Left cardiac atrium (tissue), 4 donors: ENCODE measurements at regions of chr7 and their contacts with region 1.

Region 1: GRCh38 chr7:30791114-30791779 is 20.0 kb downstream of the MINDY4 start:
- DNase-seq: no peak
- ATAC-seq: no peak

Region 2: DNA sequence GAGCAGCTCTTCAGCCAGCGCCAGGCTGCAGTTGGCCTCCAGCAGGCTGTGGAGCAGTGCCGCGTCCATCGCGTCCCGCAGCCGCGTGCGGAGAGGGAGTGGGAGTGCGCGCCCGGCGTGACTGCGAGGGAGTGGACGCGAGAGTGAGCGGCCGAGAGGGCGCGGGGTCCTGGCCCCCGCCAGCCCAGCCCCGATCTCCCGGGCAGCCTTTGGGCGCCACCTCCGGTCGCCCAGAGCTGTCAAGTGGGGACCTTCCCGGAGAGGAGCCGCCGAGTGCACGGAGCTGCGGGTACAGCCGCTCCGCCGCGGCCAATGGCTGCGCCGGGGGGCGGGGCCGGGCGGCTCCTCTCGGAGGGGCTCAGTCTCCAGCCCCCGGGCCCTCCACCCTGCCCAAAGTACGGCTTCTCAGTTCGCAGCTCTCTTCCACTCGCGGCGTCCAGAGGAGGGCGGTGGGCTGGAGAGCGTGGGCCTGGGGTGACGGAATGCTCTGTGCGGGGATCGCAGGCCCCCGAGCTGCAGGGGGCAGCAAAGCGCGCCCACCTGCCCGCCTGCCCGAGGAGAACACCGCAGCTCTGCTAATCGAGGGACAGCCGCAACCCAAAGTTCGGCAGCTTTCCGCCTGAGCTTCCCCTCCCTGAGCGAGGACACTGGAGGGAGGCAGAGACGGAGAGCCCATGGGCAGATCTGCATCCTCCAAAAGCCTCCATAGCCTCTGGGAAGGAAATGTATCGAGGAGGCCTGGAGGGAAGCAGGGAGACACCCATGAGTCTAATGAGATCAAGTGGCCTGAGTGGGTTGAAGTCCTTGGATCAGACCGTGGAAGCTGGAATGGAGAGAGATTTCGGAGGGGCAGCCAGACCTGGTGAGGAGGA is 108.8 kb before region 1 on chr7 and contains the start of gene CRHR2:
- intact Hi-C with region 1: no loop called
- DNase-seq: peak; percentile 42
- ATAC-seq: peak; percentile 63 to 67
- total RNA-seq, gene CRHR2: 0.16 to 0.44 TPM

Region 3: DNA sequence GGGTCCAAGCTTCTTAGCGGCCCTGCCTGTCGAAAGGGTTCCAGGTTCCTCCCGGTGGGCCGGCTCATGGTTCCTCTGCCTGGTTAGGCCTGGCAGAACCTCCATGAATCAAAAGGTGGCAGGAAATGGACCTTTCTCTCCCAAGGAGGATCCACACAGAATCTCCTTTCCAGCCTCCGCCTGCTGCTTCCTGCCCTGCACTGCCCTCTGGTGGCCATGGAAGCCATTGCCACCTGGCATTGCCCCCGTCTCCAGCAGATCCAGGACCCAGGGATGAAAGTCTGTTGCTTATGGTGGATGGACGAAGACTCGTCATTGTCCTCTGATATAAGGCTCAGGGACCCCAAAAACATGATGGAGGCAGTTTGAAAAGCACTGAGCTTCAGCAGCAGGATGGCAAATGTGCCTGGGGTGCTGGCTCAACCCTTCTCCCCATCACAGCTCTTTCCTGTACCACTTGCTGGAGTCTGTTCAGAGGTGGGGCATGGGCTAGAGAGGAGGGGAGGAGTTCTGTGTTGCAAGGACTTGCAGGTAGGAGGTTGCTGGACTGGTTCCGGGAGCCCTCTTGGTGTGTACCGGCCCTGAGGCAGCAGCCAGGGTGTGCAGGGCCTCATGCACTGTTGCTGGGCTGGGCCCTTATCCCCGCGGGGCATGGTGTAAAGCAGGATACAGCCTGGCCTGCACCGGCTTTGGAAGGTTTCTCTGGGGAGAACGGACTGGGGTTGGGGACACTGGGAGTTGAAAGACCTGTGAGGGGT is 50.6 kb before region 1 on chr7:
- intact Hi-C with region 1: loop called in 1 of 2 experiments (anchors 5 kb)
- DNase-seq: peak; percentile 79
- ATAC-seq: peak; percentile 76 to 79